ENCODE measurements at regions of chr18 and their contacts with region 1.

Region 1: GRCh38 chr18:23918401-23919032 is 96.0 kb upstream of the TTC39C start:
- DNase-seq: peak; percentile 24 to 43
- ATAC-seq: peak; percentile 77 to 87
- H3K4me3 ChIP-seq: no peak overlapping the region
- H3K27ac ChIP-seq: no peak overlapping the region
- H3K4me1 ChIP-seq: no peaks in the 10 kb centered on the region
- H3K27me3 ChIP-seq: no peaks in the 10 kb centered on the region
- CTCF ChIP-seq: peak; percentile 53 to 84 (median 69)
- POLR2A ChIP-seq: no peak

Region 2: DNA sequence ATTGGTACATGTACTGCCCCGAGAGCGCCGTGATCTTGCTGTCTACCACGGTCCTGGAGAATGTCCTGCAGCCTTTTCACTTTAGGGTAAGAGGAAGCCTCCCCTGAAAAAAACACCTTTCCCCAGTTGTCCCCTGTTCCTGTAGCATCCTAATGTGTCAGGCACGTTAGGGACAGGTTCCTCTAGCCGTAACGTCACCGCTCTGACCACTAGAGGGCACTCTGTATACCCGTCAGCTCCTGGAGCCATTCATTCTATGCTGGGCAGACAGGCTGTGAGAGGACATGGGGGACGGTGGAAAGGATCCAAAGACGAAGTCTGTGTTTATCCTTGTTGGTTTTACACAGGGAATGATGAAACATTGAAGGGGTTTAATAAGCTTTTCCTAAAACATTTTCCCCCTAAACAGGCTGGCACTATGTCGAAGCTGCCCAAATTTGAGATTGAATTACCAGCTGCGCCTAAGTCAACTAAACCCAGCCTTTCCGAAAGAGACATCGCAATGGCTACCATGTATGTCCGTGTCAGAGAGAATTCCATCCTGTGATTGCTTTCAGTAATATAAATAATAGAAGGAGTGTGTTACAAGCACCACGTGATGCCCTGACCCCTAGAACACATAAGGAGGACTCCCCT is 402.5 kb before region 1 on chr18:
- in situ Hi-C with region 1: loop called in 1 of 4 experiments (anchors 10 kb)
- intact Hi-C with region 1: no loop called
- DNase-seq: peak; percentile 22 to 54
- ATAC-seq: peak; percentile 86 to 93
- H3K4me3 ChIP-seq: no peak overlapping the region
- H3K27ac ChIP-seq: no peak overlapping the region
- H3K4me1 ChIP-seq: no peaks in the 10 kb centered on the region
- H3K27me3 ChIP-seq: no peaks in the 10 kb centered on the region
- CTCF ChIP-seq: peak; percentile 56 to 88 (median 75)
- POLR2A ChIP-seq: no peak

Region 3: DNA sequence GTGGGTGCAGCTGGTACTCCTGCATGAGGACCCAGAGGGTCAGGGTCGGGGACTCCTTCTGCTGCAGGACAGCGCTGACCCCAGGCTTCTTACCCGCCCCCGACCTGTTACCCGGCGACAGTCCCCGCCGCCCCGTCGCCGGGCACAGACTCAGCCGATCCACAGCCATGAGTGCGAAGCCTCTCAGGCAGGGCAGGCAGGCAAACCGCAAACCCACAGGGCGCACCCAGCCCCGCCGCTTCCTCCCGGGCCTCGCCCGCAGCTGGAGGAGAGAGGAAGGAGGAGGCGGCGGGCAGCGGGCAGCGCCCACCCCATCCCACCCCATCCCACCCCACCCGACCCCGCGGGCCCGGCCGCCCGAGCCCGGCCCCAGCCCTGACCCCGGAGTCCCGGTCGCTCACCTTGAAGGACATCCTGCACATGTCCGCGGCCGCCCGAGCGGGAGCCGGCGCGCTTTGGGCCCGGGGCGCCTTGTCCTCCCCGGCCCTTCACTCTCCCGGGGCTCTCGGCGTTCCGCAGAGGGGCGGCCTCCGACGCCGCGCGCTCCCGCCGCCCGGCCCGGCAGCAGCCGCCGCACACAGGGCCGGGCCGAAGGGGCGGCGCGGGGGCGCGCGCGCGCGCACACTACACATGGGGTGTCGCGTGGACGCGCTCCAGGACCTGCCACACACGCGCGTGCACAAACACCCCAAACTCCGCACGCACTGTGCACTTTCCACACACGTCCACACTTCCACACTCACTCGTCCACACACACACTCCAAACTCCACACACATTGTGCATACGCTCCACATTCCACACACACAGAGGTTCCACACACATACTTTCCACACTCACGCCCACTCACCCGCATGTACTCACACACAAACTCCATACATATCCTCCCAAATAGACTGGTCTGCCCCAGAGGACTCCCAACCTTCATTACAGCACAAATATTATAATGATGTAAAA is 255.9 kb before region 1 on chr18 and contains the start of gene ANKRD29:
- in situ Hi-C with region 1: loop called in 1 of 4 experiments (anchors 25 kb)
- intact Hi-C with region 1: no loop called
- DNase-seq: no peak
- ATAC-seq: peak in 1 of 2 donors; percentile 48
- H3K4me3 ChIP-seq: peak within 1 kb of the TSS; percentile 51 to 58 (median 53)
- H3K27ac ChIP-seq: peak within 1 kb of the TSS in 1 of 4 donors; percentile 24
- H3K4me1 ChIP-seq: peaks cover 0 to 7% of the 10 kb centered on the region in 2 donors
- H3K27me3 ChIP-seq: peaks cover 37 to 44% (median 41%) of the 10 kb centered on the region in 3 donors
- CTCF ChIP-seq: no peak
- POLR2A ChIP-seq: no peak
- total RNA-seq, gene ANKRD29: 0.93 to 2.8 (median 1.6) TPM

Region 4: DNA sequence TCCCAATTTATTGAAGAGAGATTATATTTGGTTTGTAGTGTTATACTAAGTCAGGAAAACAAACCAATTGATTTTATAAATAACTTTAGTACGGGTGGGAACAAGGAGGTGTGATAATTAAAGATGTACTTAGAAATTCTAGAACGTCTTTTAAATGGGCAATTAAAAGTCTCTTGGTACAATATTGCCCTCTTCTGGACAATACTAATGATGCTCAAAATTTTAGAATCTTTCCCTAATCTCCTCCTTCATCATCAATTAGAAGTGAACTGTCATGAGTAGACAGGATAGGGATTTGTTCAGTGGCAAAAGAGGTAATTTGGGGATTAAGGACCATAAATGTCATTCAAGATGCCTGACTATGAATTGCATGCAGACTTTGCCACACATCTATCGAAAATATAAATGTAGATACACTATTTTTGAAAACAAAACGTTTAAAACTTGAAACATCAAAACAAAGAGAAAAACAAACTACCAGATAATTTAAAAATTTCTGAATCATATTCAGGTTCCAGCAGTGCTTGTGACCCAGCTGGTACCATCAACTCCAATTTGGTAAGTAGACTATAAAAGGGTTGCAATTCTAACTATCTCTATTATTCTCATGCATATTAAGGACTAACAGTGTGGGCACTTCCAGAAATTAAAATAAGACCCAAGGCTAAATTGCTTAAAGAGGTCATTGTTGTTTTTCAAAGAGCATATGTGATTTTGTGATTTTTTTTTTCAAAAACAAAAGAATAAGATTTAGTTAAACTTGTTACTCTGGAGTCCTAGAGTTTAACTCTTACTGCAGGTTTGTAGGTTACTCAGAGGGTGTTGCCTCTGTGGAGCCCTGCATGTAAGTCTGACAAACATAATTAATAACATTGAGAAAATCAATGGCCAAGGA is 105.7 kb before region 1 on chr18:
- in situ Hi-C with region 1: loop called in 1 of 4 experiments (anchors 25 kb)
- intact Hi-C with region 1: no loop called
- DNase-seq: no peak
- ATAC-seq: no peak
- H3K4me3 ChIP-seq: no peak overlapping the region
- H3K27ac ChIP-seq: no peak overlapping the region
- H3K4me1 ChIP-seq: peaks cover 5 to 6% of the 10 kb centered on the region in 2 donors
- H3K27me3 ChIP-seq: no peaks in the 10 kb centered on the region
- CTCF ChIP-seq: peak; percentile 17 to 54 (median 25)
- POLR2A ChIP-seq: no peak

Region 5: DNA sequence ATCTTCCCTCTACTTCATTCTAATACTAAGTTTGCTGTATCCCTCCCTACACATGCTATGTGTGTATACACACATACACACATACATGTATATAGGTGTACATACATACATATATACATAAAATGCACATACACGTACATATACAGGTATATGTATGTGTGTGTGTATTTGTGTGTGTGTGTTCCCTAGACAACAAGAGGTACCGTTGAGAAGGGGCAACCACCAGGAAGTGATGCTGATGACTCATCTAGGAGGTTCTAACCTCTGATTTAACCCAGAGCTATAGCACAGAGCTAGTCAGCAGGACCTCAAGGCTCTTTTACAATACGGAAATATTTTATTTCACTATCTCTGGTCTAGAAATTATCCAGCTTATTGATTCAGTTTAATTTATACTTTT is 90.1 kb before region 1 on chr18:
- in situ Hi-C with region 1: loop called in 2 of 4 experiments (anchors 10 to 25 kb)
- intact Hi-C with region 1: loop called (anchors 2 kb)
- DNase-seq: no peak
- ATAC-seq: no peak
- H3K4me3 ChIP-seq: no peak overlapping the region
- H3K27ac ChIP-seq: no peak overlapping the region
- H3K4me1 ChIP-seq: peaks cover 22 to 28% of the 10 kb centered on the region in 2 donors
- H3K27me3 ChIP-seq: no peaks in the 10 kb centered on the region
- CTCF ChIP-seq: no peak
- POLR2A ChIP-seq: no peak

Region 6: GRCh38 chr18:23851470-23852002 is 67.0 kb before region 1 on chr18:
- in situ Hi-C with region 1: no loop called
- intact Hi-C with region 1: loop called (anchors 2 kb)
- DNase-seq: no peak
- ATAC-seq: no peak
- H3K4me3 ChIP-seq: no peak overlapping the region
- H3K27ac ChIP-seq: no peak overlapping the region
- H3K4me1 ChIP-seq: no peaks in the 10 kb centered on the region
- H3K27me3 ChIP-seq: no peaks in the 10 kb centered on the region
- CTCF ChIP-seq: no peak
- POLR2A ChIP-seq: no peak

Region 7: DNA sequence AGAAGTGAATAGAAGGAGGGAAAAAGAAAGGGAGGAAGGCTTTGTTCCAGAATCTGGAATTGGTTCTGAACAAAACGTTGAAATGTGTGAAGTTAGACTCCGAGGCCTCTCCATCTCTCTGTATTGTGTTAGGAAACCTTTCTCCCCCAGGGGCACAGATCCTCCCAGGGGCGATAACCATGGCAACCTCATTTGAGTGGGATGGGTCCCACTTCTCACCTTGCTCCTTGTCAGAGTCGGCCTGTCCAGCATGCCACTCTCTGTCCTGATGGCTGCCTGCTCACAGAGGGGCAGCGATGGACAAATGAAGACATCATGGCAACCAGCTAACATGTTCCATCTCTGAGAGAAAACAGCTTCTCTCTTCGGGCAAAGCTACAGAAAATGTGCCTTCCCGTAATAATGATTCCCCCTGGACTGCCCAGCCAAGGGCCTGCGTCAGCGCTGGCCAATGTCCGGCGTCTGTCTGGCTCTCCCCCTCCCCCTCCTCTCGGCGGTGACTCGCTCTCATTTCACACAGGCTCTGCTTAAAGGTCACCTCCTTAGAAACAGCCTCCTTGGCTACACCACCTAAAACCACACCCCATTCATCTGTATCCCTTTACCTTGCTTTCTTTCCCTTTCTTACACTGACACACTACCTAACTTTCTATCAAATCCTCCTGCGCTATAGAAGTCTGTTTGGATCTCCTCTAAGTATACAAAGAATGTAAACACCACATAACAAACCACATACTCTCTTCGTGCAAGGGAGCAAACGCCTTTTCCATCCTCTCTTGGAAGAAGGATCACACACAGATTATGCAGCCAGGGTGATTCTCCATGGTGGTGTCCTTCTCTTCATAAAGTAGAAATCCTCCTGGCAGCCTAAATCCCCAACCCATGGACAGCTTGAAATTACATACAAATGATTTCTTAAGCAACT is 63.9 kb after region 1 on chr18:
- in situ Hi-C with region 1: no loop called
- intact Hi-C with region 1: no loop called
- DNase-seq: peak in 1 of 2 donors; percentile 20
- ATAC-seq: peak; percentile 16 to 77
- H3K4me3 ChIP-seq: no peak overlapping the region
- H3K27ac ChIP-seq: no peak overlapping the region
- H3K4me1 ChIP-seq: no peaks in the 10 kb centered on the region
- H3K27me3 ChIP-seq: no peaks in the 10 kb centered on the region
- CTCF ChIP-seq: no peak
- POLR2A ChIP-seq: no peak

Region 8: GRCh38 chr18:24118750-24119577 is 200.4 kb after region 1 on chr18:
- in situ Hi-C with region 1: no loop called
- intact Hi-C with region 1: loop called (anchors 5 kb)
- DNase-seq: peak; percentile 17 to 48
- ATAC-seq: peak; percentile 70 to 84
- H3K4me3 ChIP-seq: no peak overlapping the region
- H3K27ac ChIP-seq: no peak overlapping the region
- H3K4me1 ChIP-seq: no peaks in the 10 kb centered on the region
- H3K27me3 ChIP-seq: no peaks in the 10 kb centered on the region
- CTCF ChIP-seq: peak; percentile 75 to 89 (median 86)
- POLR2A ChIP-seq: no peak